ENCODE measurements at regions of chr15 and their contacts with region 1.

Region 1: GRCh38 chr15:94555842-94556516 is 324.6 kb downstream of the MCTP2 start:
- DNase-seq: no peak
- H3K4me3 ChIP-seq: no peak overlapping the region
- CTCF ChIP-seq: no peak

Region 2: GRCh38 chr15:94070356-94071295 is 485.4 kb before region 1 on chr15:
- in situ Hi-C with region 1: no loop called
- DNase-seq: no peak
- H3K4me3 ChIP-seq: no peak overlapping the region
- CTCF ChIP-seq: no peak

Region 3: GRCh38 chr15:94460624-94461023 is 95.4 kb before region 1 on chr15:
- in situ Hi-C with region 1: loop called (anchors 5 kb)
- DNase-seq: no peak
- H3K4me3 ChIP-seq: no peak overlapping the region
- CTCF ChIP-seq: no peak

Measured in astrocyte of the cerebellum (primary cell).